ENCODE measurements at regions of chr11 and their contacts with region 1.

Region 1: DNA sequence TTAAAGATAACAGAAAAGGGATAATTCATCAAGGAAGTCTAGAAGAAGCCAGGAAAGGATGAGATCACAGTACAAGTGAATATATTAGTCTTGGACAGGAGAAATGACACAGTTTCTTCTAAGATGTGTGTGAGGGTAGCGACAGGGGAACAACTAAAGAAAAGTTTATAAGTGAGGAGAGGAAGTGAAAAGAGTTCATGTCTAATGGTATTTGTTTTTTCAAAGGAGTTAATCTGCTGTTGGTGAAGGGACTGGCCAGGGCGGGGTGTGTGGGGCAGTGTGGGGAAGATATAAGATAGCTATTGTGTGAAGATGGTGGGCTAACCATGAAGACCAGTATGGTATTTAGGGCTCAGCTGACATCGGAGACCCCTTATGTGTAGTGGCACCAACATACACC is 7.6 kb upstream of the PPFIBP2 start:
- DNase-seq: no peak
- H3K4me3 Mint-ChIP-seq: no peak overlapping the region
- H3K27ac Mint-ChIP-seq: no peak overlapping the region
- H3K4me1 Mint-ChIP-seq: no peaks in the 10 kb centered on the region
- H3K27me3 Mint-ChIP-seq: no peaks in the 10 kb centered on the region

Region 2: GRCh38 chr11:7665473-7666291 is 159.4 kb after region 1 on chr11:
- CTCF ChIA-PET with region 1: interaction called, 10 read pairs
- POLR2A ChIA-PET with region 1: no interaction called
- intact Hi-C with region 1: no loop called
- DNase-seq: peak; percentile 85
- H3K4me3 Mint-ChIP-seq: no peak overlapping the region
- H3K27ac Mint-ChIP-seq: no peak overlapping the region
- H3K4me1 Mint-ChIP-seq: peaks cover under 1% of the 10 kb centered on the region
- H3K27me3 Mint-ChIP-seq: no peaks in the 10 kb centered on the region

Region 3: GRCh38 chr11:8033305-8034105 is 527.3 kb after region 1 on chr11:
- CTCF ChIA-PET with region 1: no interaction called
- POLR2A ChIA-PET with region 1: no interaction called
- intact Hi-C with region 1: no loop called
- DNase-seq: peak; percentile 63
- H3K4me3 Mint-ChIP-seq: no peak overlapping the region
- H3K27ac Mint-ChIP-seq: no peak overlapping the region
- H3K4me1 Mint-ChIP-seq: peaks cover 7% of the 10 kb centered on the region
- H3K27me3 Mint-ChIP-seq: peaks cover 12% of the 10 kb centered on the region